CD4-positive, alpha-beta memory T cell (primary cell): ENCODE measurements at regions of chr11 and their contacts with region 1.

Region 1: GRCh38 chr11:119334174-119334930 is at the start of gene RNF26:
- DNase-seq: peak; percentile 93 to 96 (median 94)
- H3K4me3 ChIP-seq: peak within 1 kb of the TSS; percentile 86 to 91
- H3K4me3 Mint-ChIP-seq: peak within 1 kb of the TSS; percentile 97 to 99 (median 98)
- H3K27ac ChIP-seq: peak within 1 kb of the TSS; percentile 70
- H3K27ac Mint-ChIP-seq: peak within 1 kb of the TSS; percentile 92 to 98 (median 98)
- H3K4me1 ChIP-seq: peaks cover 27% of the 10 kb centered on the region
- H3K4me1 Mint-ChIP-seq: peaks cover 12 to 56% (median 36%) of the 10 kb centered on the region in 4 donors
- H3K27me3 ChIP-seq: peaks cover 5% of the 10 kb centered on the region
- H3K27me3 Mint-ChIP-seq: peaks cover 10% of the 10 kb centered on the region in 2 donors
- total RNA-seq, gene RNF26: 17.5 to 18.3 TPM

Region 2: DNA sequence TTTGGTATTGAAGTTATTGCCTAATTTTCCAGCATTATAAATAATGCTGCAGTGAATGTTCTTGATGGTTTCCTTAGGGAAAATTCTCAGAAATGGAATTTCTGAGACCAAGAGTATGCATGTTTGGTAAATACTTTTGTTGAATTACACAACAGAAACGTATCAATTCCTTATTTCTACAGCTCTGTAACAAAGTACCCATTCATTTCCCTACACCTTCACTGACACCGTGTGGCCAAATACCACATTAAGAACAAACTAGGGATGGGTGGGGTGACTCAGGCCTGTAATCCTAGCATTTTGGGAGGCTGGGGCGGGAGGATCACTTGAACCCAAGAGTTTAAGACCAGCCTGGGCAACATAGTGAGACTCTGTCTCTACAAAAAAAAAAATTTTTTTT is 39.2 kb before region 1 on chr11:
- CTCF ChIA-PET with region 1: no interaction called
- POLR2A ChIA-PET with region 1: no interaction called
- intact Hi-C with region 1: no loop called
- DNase-seq: no peak
- H3K4me3 ChIP-seq: no peak overlapping the region
- H3K4me3 Mint-ChIP-seq: no peak overlapping the region
- H3K27ac ChIP-seq: no peak overlapping the region
- H3K27ac Mint-ChIP-seq: no peak overlapping the region
- H3K4me1 ChIP-seq: no peaks in the 10 kb centered on the region
- H3K4me1 Mint-ChIP-seq: no peaks in the 10 kb centered on the region
- H3K27me3 ChIP-seq: no peaks in the 10 kb centered on the region
- H3K27me3 Mint-ChIP-seq: no peaks in the 10 kb centered on the region

Region 3: GRCh38 chr11:119381181-119381988 is 47.0 kb after region 1 on chr11 and contains the start of gene USP2:
- CTCF ChIA-PET with region 1: interaction called, 11 read pairs
- POLR2A ChIA-PET with region 1: interaction called, 3 read pairs
- intact Hi-C with region 1: no loop called
- DNase-seq: peak; percentile 96 to 98 (median 97)
- H3K4me3 ChIP-seq: peak within 1 kb of the TSS; percentile 77 to 86
- H3K4me3 Mint-ChIP-seq: no peak within 1 kb of the TSS
- H3K27ac ChIP-seq: peak within 1 kb of the TSS; percentile 49
- H3K27ac Mint-ChIP-seq: peak within 1 kb of the TSS in 3 of 7 donors; percentile 75 to 87 (median 87)
- H3K4me1 ChIP-seq: peaks cover 17% of the 10 kb centered on the region
- H3K4me1 Mint-ChIP-seq: peaks cover 0 to 9% (median 6%) of the 10 kb centered on the region in 4 donors
- H3K27me3 ChIP-seq: no peaks in the 10 kb centered on the region
- H3K27me3 Mint-ChIP-seq: peaks cover 0 to 3% of the 10 kb centered on the region in 2 donors
- total RNA-seq, gene USP2: 0.17 to 0.22 TPM